Naive thymus-derived CD8-positive, alpha-beta T cell (primary cell): ENCODE measurements at regions of chr11 and their contacts with region 1.

Region 1: DNA sequence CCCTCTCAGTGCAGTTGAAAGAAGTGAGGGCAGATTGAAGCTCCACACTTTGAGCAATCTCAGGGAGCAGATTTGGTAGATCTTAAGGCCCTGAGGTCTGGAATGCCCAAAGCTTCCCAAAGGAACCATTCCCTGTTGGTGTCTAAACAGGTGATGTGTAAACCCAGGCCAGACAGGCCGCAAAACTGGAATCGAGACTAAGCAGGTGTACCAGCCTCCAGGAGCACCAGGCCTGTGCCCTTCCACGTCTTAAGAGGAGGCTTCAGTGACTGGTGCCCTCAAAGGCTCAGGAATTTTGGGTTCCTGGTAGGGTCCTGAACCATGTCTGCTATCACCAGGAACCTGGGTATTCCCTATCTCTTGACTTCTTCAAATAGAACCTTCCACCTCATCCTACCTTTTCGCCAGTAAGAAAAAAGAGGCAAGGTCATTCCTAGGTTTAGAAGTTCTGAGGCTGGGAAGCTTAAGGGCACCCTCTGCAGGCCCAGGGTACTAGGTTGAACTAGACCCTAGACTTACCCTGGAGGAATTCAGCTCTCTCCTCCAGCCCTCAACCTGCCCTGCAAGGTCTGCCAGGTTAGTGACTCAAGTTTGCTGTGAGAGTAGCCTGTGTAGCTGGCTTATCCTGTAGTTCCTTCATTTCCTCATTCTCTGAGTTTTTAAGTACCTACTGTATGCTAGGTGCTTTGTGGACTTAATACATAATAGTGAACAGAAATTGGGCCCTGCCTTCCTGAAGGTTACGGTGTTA is 100.0 kb upstream of the NNMT start:
- DNase-seq: peak in 3 of 10 donors; percentile 27 to 30 (median 29)
- ATAC-seq: peak; percentile 77 to 82
- H3K4me3 Mint-ChIP-seq: no peak overlapping the region
- H3K27ac Mint-ChIP-seq: no peak overlapping the region
- H3K4me1 Mint-ChIP-seq: peaks cover 15 to 46% (median 19%) of the 10 kb centered on the region in 4 donors
- H3K27me3 Mint-ChIP-seq: no peaks in the 10 kb centered on the region

Region 2: DNA sequence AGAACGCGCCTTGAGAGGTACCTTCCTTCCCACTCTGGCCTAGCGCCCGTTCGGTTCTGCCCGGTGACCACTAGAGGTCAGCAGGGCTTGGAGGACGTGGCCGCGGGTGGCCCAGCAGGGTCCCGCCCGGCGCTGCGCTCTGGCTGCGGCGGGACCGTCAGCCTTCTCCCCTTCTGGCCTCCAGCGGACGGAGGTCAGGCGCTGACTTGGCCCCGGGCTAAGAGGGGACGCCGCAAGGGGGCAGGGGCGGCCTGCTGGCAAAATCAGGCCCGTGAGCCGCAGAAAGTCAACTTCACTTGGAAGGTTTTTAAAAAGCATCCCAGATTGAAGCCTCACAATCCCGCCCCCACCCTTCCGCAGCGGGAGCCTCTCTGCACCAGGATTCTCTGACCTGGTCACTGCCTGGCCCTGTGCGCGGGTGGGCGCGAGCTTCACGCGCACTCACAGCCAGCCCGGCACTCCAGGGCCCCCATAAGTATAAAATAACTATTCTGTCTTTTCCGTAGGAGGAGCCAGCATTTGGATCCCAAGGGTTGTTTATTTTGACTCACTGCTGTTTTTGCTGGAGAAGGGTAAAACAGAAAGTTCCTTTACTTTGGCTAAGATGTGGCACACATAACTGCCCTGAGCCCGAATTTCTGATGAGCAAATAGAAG is 159.9 kb before region 1 on chr11:
- POLR2A ChIA-PET with region 1: interaction called, 10 read pairs
- DNase-seq: peak; percentile 14 to 76 (median 50)
- ATAC-seq: peak; percentile 73 to 84
- H3K4me3 Mint-ChIP-seq: peak overlapping the region in 6 of 10 donors; percentile 6 to 72 (median 30)
- H3K27ac Mint-ChIP-seq: no peak overlapping the region
- H3K4me1 Mint-ChIP-seq: peaks cover 4 to 11% (median 8%) of the 10 kb centered on the region in 4 donors
- H3K27me3 Mint-ChIP-seq: peaks cover 1 to 13% (median 6%) of the 10 kb centered on the region in 5 donors

Region 3: DNA sequence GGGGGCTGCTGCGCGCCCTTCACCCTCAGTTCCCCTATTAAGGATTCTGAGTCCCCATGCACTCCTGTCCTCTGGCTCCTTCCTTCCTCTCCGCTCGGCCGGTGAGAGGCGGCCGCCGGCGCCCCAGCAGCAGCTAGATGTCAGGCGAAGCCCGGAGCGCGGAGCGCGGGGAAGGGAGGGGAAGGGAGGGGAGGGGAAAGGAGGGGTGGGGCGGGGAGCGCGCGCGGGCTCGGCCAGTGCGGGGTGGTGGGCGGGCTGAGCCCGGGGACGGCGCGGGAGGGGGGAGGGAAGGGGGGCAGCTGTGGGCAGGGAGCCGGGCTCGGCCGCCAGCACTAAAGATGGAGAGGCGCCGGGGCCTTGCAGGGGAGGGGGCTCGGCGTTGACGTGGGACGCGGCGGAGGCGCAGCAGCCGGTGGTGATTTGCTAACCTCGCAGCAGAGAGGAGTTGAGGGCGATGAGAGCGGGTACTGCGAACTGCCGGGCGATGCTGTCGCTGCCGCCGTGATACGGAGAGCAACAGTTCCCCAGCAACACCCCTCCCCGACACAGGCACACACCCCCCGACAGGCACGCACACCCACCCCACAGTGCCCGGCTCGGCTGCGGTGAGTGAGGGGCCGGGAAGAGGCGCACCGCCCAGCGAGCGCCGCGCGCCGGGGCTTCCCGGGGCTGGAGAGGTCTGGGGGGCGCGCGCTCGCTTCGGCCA is 136.7 kb before region 1 on chr11 and contains the start of gene ZBTB16:
- POLR2A ChIA-PET with region 1: interaction called, 18 read pairs
- DNase-seq: peak; percentile 31 to 76 (median 42)
- ATAC-seq: peak; percentile 66 to 67
- H3K4me3 Mint-ChIP-seq: peak within 1 kb of the TSS; percentile 81 to 96 (median 90)
- H3K27ac Mint-ChIP-seq: peak within 1 kb of the TSS; percentile 9 to 87 (median 57)
- H3K4me1 Mint-ChIP-seq: peaks cover 8 to 28% (median 18%) of the 10 kb centered on the region in 4 donors
- H3K27me3 Mint-ChIP-seq: peaks cover 6 to 40% (median 20%) of the 10 kb centered on the region in 5 donors
- polyA plus RNA-seq, gene ZBTB16: 0.21 to 7.5 (median 4.4) TPM

Region 4: DNA sequence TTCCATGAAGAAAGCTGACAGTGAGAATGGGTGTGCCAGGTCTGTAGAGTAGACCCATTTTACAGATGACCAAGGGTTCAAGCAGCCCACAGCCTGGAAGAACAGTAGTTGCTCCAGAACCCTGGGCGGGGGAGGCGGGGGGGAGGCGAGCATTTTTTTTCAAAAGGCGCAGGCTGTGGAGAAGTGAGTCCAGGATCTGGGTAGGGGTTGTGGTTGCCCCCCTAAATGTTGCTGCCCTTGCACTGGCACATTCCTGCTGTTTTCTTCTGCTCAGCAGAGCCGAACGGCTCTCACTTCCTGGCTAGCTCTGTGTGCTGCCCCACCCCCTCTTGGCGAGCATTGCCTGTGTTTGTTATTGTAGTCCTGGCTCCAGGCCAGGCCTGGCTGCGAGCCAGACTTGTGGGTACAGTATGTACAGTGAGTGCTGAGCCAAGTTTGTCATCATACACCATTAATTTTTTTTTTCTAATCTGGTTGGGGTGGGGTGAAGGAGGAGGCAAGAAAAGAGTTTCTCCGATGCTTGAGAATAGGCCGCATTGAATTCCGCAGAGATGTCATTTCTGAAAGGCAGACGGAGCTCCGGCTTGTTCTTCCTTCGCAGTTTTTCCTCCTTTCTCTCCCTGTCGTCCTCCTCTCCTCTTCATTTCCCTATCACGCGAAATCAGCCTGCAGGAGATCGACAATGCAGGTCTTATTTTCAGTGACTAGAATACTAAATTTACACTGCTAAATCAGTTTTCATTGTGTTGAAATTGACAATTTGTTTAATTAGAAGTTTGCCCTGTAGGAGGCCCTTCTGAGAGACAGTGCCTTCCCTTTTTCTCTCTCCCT is 36.1 kb before region 1 on chr11:
- POLR2A ChIA-PET with region 1: interaction called, 21 read pairs
- DNase-seq: peak; percentile 93 to 99 (median 98)
- ATAC-seq: peak; percentile 95 to 96
- H3K4me3 Mint-ChIP-seq: peak overlapping the region; percentile 50 to 80 (median 74)
- H3K27ac Mint-ChIP-seq: peak overlapping the region; percentile 72 to 97 (median 96)
- H3K4me1 Mint-ChIP-seq: peaks cover 51 to 97% (median 95%) of the 10 kb centered on the region in 4 donors
- H3K27me3 Mint-ChIP-seq: no peaks in the 10 kb centered on the region

Region 5: GRCh38 chr11:114180301-114181055 is 15.7 kb before region 1 on chr11:
- POLR2A ChIA-PET with region 1: interaction called, 54 read pairs
- DNase-seq: peak in 5 of 10 donors; percentile 20 to 67 (median 43)
- ATAC-seq: peak in 1 of 2 donors; percentile 47
- H3K4me3 Mint-ChIP-seq: peak overlapping the region in 8 of 10 donors; percentile 29 to 66 (median 42)
- H3K27ac Mint-ChIP-seq: peak overlapping the region; percentile 36 to 93 (median 70)
- H3K4me1 Mint-ChIP-seq: peaks cover 46 to 94% (median 84%) of the 10 kb centered on the region in 4 donors
- H3K27me3 Mint-ChIP-seq: no peaks in the 10 kb centered on the region

Region 6: GRCh38 chr11:114291842-114292680 is 95.9 kb after region 1 on chr11:
- POLR2A ChIA-PET with region 1: no interaction called
- DNase-seq: no peak
- ATAC-seq: no peak
- H3K4me3 Mint-ChIP-seq: no peak overlapping the region
- H3K27ac Mint-ChIP-seq: no peak overlapping the region
- H3K4me1 Mint-ChIP-seq: peaks cover 0 to 5% (median under 1%) of the 10 kb centered on the region in 4 donors
- H3K27me3 Mint-ChIP-seq: peaks cover 0 to 10% (median 5%) of the 10 kb centered on the region in 5 donors